Caco-2 (cell line): ENCODE measurements at regions of chr2 and their contacts with region 1.

Region 1: DNA sequence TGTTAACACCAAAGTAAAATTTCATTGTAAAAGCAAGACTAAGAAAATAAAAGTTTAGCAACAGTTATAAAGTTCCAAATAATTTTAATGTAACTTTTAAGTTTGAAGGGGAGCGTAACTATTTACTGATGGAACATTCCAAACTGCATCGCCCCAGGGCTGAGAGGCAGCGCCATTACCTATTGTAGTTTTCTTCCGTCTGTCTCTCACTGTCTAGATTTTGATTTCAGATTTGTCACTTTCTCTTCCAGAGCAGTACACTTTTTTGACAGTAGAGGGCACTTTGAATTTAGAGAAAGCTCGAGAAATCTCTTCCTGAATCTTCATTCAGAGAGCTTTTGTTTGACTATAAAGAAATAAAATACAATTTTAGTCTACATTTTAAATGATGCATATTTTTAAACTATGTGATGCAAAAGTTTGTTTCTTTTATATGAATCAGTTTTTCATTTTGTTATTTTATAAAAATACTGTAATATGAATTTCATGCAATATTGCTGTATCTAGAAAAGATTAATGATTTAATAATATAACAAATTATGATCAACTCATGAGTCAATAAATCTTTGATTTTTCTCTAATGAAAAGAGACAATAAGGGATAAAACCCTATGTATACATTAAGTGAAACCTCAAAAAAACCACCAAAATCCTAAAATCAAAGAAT is 389.8 kb downstream of the FIGN start:
- DNase-seq: peak in 1 of 2 experiments; percentile 71
- H3K4me3 ChIP-seq: no peak overlapping the region
- H3K4me3 Mint-ChIP-seq: no peak overlapping the region
- H3K27ac Mint-ChIP-seq: no peak overlapping the region
- H3K4me1 ChIP-seq: peaks cover 17% of the 10 kb centered on the region
- H3K4me1 Mint-ChIP-seq: peaks cover 10% of the 10 kb centered on the region
- H3K27me3 ChIP-seq: no peaks in the 10 kb centered on the region
- H3K27me3 Mint-ChIP-seq: no peaks in the 10 kb centered on the region
- CTCF ChIP-seq: peak; percentile 50 to 86

Region 2: DNA sequence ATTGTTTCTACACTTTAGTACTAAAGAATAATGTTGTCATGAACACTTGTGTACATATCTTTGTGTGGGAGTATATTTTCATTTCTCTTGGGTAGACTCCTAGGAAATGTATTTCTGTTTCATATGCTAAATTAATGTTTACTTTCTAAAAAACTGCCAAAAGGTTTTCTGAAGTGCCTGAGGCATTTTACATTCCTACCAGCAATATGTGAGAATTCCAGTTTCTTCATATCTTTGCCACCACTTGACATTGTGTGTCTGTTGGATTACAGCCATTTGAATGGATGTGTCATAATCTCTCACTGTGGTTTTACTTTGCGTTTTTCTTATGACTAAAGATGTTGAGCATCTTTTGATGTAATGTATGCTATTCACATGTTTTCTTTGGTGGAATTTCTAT is 79.3 kb before region 1 on chr2:
- CTCF ChIA-PET with region 1: no interaction called
- POLR2A ChIA-PET with region 1: no interaction called
- intact Hi-C with region 1: no loop called
- DNase-seq: no peak
- H3K4me3 ChIP-seq: no peak overlapping the region
- H3K4me3 Mint-ChIP-seq: no peak overlapping the region
- H3K27ac Mint-ChIP-seq: no peak overlapping the region
- H3K4me1 ChIP-seq: no peaks in the 10 kb centered on the region
- H3K4me1 Mint-ChIP-seq: no peaks in the 10 kb centered on the region
- H3K27me3 ChIP-seq: no peaks in the 10 kb centered on the region
- H3K27me3 Mint-ChIP-seq: no peaks in the 10 kb centered on the region
- CTCF ChIP-seq: no peak

Region 3: DNA sequence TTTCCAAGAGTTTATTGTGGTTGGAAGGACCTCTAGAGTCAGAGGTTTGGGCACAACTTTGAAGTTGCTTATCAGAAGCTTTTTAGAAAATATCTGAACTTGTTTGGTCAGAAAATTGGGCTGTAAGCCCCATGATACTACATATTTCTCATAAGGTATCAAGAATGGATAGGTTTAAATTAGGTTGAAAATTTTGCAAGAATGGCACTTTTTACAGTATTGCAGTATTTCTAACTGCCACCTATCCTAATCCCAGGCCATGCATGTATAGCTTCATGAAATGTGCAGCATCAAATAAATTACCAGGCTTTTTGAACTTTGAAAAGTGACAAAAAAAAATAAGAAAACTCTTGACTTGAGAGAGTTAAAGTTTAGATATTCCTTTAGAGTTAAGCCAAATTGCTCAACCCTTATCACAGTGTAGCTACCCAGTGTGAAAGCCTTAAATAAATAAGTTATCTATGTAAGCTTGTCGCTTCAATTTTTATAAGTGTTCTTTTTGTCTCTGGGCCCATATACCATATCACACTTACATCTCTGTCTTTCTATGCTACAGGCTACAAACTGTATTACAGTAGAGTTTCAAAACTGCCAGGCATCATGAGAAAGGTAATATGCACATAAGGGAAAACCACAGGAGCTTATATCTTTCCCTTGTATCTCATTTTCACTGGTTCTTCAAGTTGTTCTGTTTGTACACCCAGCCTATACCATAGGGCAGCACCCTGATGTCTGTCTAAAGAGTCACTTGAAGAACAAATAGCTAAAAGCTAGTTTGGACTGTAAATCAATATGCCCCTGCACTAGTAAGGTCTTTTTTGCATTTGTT is 22.8 kb after region 1 on chr2:
- CTCF ChIA-PET with region 1: interaction called, 4 read pairs
- POLR2A ChIA-PET with region 1: no interaction called
- intact Hi-C with region 1: loop called (anchors 1 kb)
- DNase-seq: no peak
- H3K4me3 ChIP-seq: no peak overlapping the region
- H3K4me3 Mint-ChIP-seq: no peak overlapping the region
- H3K27ac Mint-ChIP-seq: no peak overlapping the region
- H3K4me1 ChIP-seq: peaks cover 9% of the 10 kb centered on the region
- H3K4me1 Mint-ChIP-seq: peaks cover 7% of the 10 kb centered on the region
- H3K27me3 ChIP-seq: no peaks in the 10 kb centered on the region
- H3K27me3 Mint-ChIP-seq: no peaks in the 10 kb centered on the region
- CTCF ChIP-seq: no peak

Region 4: GRCh38 chr2:163455815-163456214 is 109.8 kb after region 1 on chr2:
- CTCF ChIA-PET with region 1: no interaction called
- POLR2A ChIA-PET with region 1: no interaction called
- intact Hi-C with region 1: loop called (anchors 10 kb)
- DNase-seq: no peak
- H3K4me3 ChIP-seq: no peak overlapping the region
- H3K4me3 Mint-ChIP-seq: no peak overlapping the region
- H3K27ac Mint-ChIP-seq: no peak overlapping the region
- H3K4me1 ChIP-seq: peaks cover 9% of the 10 kb centered on the region
- H3K4me1 Mint-ChIP-seq: peaks cover 13% of the 10 kb centered on the region
- H3K27me3 ChIP-seq: no peaks in the 10 kb centered on the region
- H3K27me3 Mint-ChIP-seq: peaks cover 3% of the 10 kb centered on the region
- CTCF ChIP-seq: no peak

Region 5: GRCh38 chr2:163984988-163985387 is 638.9 kb after region 1 on chr2:
- CTCF ChIA-PET with region 1: no interaction called
- POLR2A ChIA-PET with region 1: no interaction called
- intact Hi-C with region 1: loop called (anchors 10 kb)
- DNase-seq: no peak
- H3K4me3 ChIP-seq: no peak overlapping the region
- H3K4me3 Mint-ChIP-seq: no peak overlapping the region
- H3K27ac Mint-ChIP-seq: no peak overlapping the region
- H3K4me1 ChIP-seq: no peaks in the 10 kb centered on the region
- H3K4me1 Mint-ChIP-seq: no peaks in the 10 kb centered on the region
- H3K27me3 ChIP-seq: no peaks in the 10 kb centered on the region
- H3K27me3 Mint-ChIP-seq: no peaks in the 10 kb centered on the region
- CTCF ChIP-seq: no peak

Region 6: DNA sequence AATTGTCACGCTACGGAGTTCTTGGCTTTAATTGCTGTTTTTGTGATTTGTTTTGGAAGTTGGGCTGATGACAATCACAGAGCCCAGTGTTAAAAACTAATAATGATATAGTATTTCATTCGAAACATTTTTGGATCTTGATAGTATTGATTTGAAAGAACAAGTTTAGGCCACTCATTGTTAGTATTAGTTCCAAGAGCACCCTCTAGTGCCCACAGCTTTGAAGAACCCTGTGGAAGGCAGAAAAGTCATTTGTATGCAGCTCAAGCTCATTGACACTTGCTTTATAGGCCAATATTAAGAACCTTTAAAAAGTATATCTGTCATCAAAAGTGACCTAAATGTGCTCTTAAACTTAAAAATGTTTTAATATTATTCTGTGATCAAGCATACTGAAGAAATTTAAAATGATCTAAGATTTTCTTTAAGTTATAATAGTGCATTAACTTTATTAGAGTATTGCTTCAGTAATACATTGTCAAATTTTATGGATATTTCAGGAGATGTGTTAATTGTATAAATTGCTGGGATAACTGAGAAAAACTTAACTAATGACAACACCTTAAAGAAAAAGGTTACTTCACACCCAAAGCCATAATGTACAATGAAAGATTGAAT is 1084.2 kb after region 1 on chr2:
- CTCF ChIA-PET with region 1: no interaction called
- POLR2A ChIA-PET with region 1: no interaction called
- intact Hi-C with region 1: loop called (anchors 1 kb)
- DNase-seq: peak; percentile 39 to 41
- H3K4me3 ChIP-seq: no peak overlapping the region
- H3K4me3 Mint-ChIP-seq: no peak overlapping the region
- H3K27ac Mint-ChIP-seq: no peak overlapping the region
- H3K4me1 ChIP-seq: no peaks in the 10 kb centered on the region
- H3K4me1 Mint-ChIP-seq: no peaks in the 10 kb centered on the region
- H3K27me3 ChIP-seq: no peaks in the 10 kb centered on the region
- H3K27me3 Mint-ChIP-seq: peaks cover 6% of the 10 kb centered on the region
- CTCF ChIP-seq: peak; percentile 57 to 72